ENCODE measurements at regions of chr11 and their contacts with region 1.

Region 1: DNA sequence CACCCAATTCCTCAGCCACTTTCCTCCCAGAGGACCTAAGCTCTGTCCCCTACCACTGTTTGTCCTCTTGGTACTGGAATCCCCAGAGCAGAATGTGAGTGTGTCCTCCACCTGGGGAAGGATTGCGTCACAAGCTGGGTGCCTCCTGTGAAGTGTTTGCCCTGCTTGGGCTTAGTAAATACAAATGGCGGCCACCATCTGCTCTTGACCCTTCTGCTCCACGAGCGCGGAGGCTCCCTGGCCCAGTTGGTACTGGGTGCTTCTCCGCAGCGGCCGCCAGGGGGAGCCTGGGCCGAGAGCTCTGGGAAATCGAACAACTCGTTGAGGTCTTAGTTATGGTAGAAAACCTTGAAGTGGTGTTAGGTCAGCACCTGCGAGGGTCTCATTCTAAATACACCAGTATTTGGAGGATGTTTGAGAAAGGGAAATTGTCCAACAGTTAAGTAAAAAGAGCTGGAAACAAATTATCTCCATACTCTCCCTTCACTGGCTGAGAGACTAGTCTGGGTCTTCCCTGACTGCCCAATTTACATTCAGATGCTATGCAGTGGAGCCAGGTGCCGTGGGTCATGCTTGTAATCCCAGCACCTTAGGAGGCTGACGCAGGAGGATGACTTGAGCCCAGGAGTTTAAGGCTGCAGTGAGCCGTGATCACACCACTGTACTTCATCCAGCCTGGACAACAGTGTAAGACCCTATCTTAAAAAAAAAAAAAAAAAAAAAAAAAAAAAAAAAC is 74.6 kb upstream of the TEAD1 start:
- DNase-seq: peak; percentile 41 to 69
- ATAC-seq: peak; percentile 96 to 99
- H3K4me3 ChIP-seq: no peak overlapping the region
- H3K27ac ChIP-seq: peak overlapping the region; percentile 29 to 63; a peak in 3 of 6 replicates
- H3K4me1 ChIP-seq: 0 out of 3 replicates have a peak, but pooled peaks cover 3% of the 10 kb centered on the region
- CTCF ChIP-seq: peak; percentile 80
- EP300 ChIP-seq: no peak
- POLR2A ChIP-seq: no peak
- RAD21 ChIP-seq: peak; percentile 80 to 81

Region 2: DNA sequence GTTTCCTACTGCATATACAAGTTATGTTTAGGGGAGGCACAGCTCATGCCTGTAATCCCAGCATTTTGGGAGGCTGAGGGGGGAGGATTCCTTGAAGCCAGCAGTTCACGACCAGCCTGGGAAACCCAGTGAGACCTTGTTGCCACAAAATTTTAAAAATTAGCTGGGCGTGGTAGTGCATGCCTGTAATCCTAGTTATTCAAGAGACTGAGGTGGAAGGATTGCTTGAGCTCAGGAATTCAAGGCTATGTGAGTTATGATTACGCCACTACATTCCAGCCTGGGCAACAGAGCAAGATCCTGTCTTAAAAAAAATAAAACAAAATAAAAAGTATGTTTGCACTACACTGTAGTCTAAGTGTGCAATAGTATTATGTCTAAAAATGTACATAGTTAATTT is 34.2 kb before region 1 on chr11:
- CTCF ChIA-PET with region 1: no interaction called
- POLR2A ChIA-PET with region 1: no interaction called
- DNase-seq: no peak
- ATAC-seq: no peak
- H3K4me3 ChIP-seq: no peak overlapping the region
- H3K27ac ChIP-seq: no peak overlapping the region
- H3K4me1 ChIP-seq: peaks cover 8% of the 10 kb centered on the region; the same call in 2 of the 3 replicates
- CTCF ChIP-seq: no peak
- EP300 ChIP-seq: no peak
- POLR2A ChIP-seq: no peak
- RAD21 ChIP-seq: no peak

Region 3: DNA sequence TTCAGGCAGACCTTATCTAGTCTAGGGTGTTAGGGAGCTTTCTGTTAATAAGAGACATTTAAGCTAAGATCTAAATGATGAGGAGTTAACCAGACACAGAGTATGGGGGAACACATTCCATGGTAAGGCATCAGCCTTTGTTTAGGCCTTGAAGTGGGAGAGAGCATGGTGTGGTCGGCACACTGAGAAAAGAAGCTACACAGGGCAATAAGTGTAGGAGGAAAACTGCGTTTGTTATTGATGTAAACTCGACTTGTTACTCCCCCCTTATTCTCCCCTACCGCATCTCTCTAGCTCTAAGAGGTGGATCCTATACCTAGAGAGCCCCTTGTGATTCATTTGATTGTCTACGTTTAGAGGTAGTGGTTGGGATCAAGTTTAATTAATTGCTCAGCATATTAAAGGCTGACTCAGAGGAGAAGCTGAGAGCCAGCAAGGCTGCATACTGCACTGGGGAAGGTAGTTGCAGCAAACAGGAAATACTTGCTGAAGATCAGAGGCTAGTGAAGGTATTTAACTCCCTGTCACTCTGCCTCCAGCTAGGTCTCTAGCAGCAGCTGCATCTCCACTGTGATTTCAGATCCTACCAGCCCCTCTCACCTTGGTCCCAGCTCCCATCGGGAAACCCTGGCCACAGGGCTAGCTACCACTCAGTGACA is 12.1 kb before region 1 on chr11:
- CTCF ChIA-PET with region 1: interaction called, 32 read pairs
- POLR2A ChIA-PET with region 1: no interaction called
- DNase-seq: no peak
- ATAC-seq: peak; percentile 66 to 73
- H3K4me3 ChIP-seq: no peak overlapping the region
- H3K27ac ChIP-seq: peak overlapping the region in 1 of 2 experiments; percentile 46; a peak in 1 of 6 replicates
- H3K4me1 ChIP-seq: 0 out of 3 replicates have a peak, but pooled peaks cover 2% of the 10 kb centered on the region
- CTCF ChIP-seq: no peak
- EP300 ChIP-seq: no peak
- POLR2A ChIP-seq: no peak
- RAD21 ChIP-seq: no peak

Region 4: GRCh38 chr11:12611352-12611751 is 11.8 kb after region 1 on chr11:
- CTCF ChIA-PET with region 1: interaction called, 34 read pairs
- POLR2A ChIA-PET with region 1: no interaction called
- DNase-seq: no peak
- ATAC-seq: no peak
- H3K4me3 ChIP-seq: no peak overlapping the region
- H3K27ac ChIP-seq: no peak overlapping the region
- H3K4me1 ChIP-seq: no peaks in the 10 kb centered on the region
- CTCF ChIP-seq: no peak
- EP300 ChIP-seq: no peak
- POLR2A ChIP-seq: no peak
- RAD21 ChIP-seq: no peak

Region 5: GRCh38 chr11:12636871-12637410 is 37.4 kb after region 1 on chr11:
- CTCF ChIA-PET with region 1: interaction called, 14 read pairs
- POLR2A ChIA-PET with region 1: no interaction called
- DNase-seq: no peak
- ATAC-seq: no peak
- H3K4me3 ChIP-seq: no peak overlapping the region
- H3K27ac ChIP-seq: no peak overlapping the region
- H3K4me1 ChIP-seq: no peaks in the 10 kb centered on the region
- CTCF ChIP-seq: no peak
- EP300 ChIP-seq: no peak
- POLR2A ChIP-seq: no peak
- RAD21 ChIP-seq: no peak

Region 6: DNA sequence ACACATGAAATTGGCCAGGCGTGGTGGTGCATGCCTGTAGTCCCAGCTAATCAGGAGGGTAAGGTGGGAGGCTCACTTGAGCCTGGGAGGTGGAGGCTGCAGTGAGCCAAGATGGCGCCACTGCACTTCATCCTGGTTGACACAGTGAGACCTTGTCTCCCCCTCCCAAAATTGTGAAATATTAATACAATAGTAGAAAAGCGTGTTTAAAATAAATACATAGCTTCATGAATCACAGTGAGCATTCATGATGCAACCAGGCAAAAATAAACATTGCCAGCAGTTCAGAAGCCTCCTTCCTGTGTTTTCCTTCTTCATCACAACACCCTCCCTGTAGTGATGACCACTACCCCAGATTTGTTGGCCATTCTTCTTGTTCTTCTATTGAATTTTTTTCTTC is 70.4 kb after region 1 on chr11:
- CTCF ChIA-PET with region 1: interaction called, 13 read pairs
- POLR2A ChIA-PET with region 1: interaction called, 3 read pairs
- DNase-seq: no peak
- ATAC-seq: no peak
- H3K4me3 ChIP-seq: no peak overlapping the region
- H3K27ac ChIP-seq: peak overlapping the region in 1 of 2 experiments; percentile 46; a peak in 2 of 6 replicates
- H3K4me1 ChIP-seq: peaks cover 12% of the 10 kb centered on the region
- CTCF ChIP-seq: no peak
- EP300 ChIP-seq: no peak
- POLR2A ChIP-seq: no peak
- RAD21 ChIP-seq: no peak; a peak in 1 of 5 replicates

Measured in A549 (cell line).